Dendritic cell treated with granulocyte-macrophage colony-stimulating factor and Interleukin-4, amounts not matched to agents 40 ng/mL and 50 ng/mL, for 4 days (primary cell): ENCODE measurements at regions of chr6 and their contacts with region 1.

Region 1: GRCh38 chr6:80605165-80605989 is 498.9 kb downstream of the BCKDHB start:
- H3K4me3 Mint-ChIP-seq: no peak overlapping the region
- H3K27ac Mint-ChIP-seq: no peak overlapping the region
- H3K4me1 Mint-ChIP-seq: peaks cover 12% of the 10 kb centered on the region
- H3K27me3 Mint-ChIP-seq: peaks cover 13% of the 10 kb centered on the region

Region 2: GRCh38 chr6:79878142-79878753 is 727.1 kb before region 1 on chr6:
- intact Hi-C with region 1: no loop called
- H3K4me3 Mint-ChIP-seq: no peak overlapping the region
- H3K27ac Mint-ChIP-seq: no peak overlapping the region
- H3K4me1 Mint-ChIP-seq: peaks cover 28% of the 10 kb centered on the region
- H3K27me3 Mint-ChIP-seq: no peaks in the 10 kb centered on the region

Region 3: DNA sequence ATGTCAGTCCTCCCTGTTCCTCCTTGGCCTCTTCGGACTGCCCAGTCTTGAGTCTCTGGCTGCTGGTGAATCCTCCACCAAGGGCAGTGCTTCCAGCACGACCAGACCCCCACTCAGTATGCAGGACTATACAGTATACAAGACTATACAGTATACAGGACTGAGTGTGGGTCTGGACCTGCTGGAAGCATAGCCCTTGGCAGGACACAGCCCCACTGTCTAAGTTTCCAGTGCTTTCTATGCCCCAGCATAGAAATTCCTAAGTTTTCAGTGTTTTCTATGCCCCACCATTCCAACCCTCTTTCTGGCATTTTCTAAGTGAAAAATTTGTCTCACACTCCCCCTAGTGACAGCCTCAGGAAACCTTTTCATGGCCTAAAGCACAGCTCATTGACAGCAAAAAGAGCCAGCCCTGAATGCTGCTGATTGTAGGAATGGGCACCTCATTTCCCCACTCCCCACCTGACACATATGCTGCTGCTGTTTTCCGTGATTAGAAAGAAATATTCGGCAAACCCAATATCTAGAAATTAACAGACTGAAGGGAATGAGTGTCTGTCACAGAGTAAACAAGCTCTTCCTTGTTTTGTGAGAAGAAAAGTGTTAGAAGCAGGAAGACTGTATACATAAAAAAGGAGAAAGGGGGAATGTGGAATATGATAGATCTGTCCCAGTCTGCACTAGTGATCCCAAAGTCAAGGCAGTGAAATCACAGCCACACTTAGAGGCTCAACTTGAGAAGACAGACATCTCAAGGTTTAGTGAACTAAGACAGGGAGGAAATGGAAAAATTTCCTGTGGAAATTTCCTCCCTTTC is 1435.2 kb after region 1 on chr6:
- intact Hi-C with region 1: loop called (anchors 2 kb)
- H3K4me3 Mint-ChIP-seq: no peak overlapping the region
- H3K27ac Mint-ChIP-seq: no peak overlapping the region
- H3K4me1 Mint-ChIP-seq: no peaks in the 10 kb centered on the region
- H3K27me3 Mint-ChIP-seq: no peaks in the 10 kb centered on the region